Head of caudate nucleus (tissue), 42 donors: ENCODE measurements at regions of chr4 and their contacts with region 1.

Region 1: GRCh38 chr4:119041951-119042560 is 93.6 kb upstream of the MYOZ2 start:
- DNase-seq: peak in 38 of 42 donors; percentile 24 to 86 (median 60)

Region 2: DNA sequence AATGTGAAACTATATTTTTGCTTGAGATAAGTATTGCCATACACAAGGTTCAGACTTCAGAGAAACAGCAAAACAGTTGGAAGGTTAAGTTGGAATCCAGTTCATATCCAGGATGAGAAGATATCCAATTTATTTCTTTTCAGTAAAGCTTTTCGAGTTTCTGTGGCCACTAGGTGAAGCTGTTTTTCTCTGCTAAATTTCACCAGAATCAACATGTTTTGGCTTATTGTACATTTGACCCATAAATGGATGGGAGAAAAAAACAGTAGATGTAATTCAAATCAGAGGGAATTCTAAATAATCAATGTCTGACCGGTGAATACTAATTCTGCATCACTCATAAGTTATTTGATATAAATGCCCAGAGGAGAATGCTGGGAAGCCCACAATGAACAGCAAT is 365.9 kb before region 1 on chr4:
- intact Hi-C with region 1: no loop called
- DNase-seq: no peak

Region 3: GRCh38 chr4:119212234-119212963 is 170.3 kb after region 1 on chr4 and contains the start of gene USP53:
- intact Hi-C with region 1: loop called (anchors 10 kb)
- DNase-seq: peak; percentile 85 to 99 (median 94)

Region 4: GRCh38 chr4:119286377-119287002 is 244.4 kb after region 1 on chr4:
- intact Hi-C with region 1: loop called (anchors 10 kb)
- DNase-seq: peak in 9 of 42 donors; percentile 13 to 48 (median 19)